Dendritic cell treated with granulocyte-macrophage colony-stimulating factor and Interleukin-4, amounts not matched to agents 40 ng/mL and 50 ng/mL, for 4 days (primary cell): ENCODE measurements at regions of chr13 and their contacts with region 1.

Region 1: GRCh38 chr13:48037346-48038173 is at the start of gene NUDT15:
- H3K4me3 Mint-ChIP-seq: peak within 1 kb of the TSS; percentile 90
- H3K27ac Mint-ChIP-seq: peak within 1 kb of the TSS; percentile 99
- H3K4me1 Mint-ChIP-seq: peaks cover 20% of the 10 kb centered on the region
- H3K27me3 Mint-ChIP-seq: no peaks in the 10 kb centered on the region

Region 2: DNA sequence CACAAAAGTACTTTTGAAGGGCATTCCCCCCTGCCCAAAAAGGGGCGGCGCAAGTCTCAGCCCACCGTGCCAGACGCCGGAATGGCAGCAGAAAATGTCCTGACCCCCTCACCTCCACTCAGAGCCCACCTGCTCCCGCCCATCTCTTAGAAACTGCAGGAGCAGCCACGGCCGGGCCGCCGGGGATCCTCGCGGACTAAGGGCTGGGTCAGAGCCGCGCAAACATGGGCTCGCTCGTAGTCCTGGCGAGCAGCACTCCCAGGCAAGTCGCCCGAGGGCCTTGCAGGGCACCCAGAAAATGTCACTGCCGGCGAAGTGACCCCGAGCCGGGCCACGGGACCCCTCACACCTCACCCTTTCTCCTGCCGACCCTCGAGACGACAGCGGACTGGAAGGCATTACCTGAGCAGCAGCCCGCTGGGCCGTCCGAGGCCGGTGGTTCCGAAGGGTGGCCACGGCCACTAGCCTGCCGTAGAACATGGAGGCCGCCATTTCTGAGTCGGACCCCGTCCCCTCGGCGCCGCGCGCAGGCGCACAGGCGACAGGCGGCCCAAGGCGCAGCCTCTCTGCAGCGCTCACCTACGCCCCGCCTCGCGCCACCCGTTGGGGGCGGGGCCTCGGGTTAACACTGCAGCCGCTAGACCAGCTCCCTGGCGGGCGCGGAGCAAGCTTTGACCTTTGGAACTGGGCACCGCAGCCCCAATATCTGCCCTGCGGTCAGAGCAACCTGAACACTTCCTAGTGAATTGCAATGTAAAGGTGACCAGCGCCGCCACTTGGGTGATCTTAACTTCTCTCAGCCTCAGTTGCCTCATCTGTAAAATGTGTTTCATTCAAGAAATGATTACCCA is 36.6 kb before region 1 on chr13 and contains the start of gene SUCLA2:
- intact Hi-C with region 1: loop called (anchors 5 kb)
- H3K4me3 Mint-ChIP-seq: peak within 1 kb of the TSS; percentile 96
- H3K27ac Mint-ChIP-seq: peak within 1 kb of the TSS; percentile 90
- H3K4me1 Mint-ChIP-seq: peaks cover 30% of the 10 kb centered on the region
- H3K27me3 Mint-ChIP-seq: no peaks in the 10 kb centered on the region

Region 3: DNA sequence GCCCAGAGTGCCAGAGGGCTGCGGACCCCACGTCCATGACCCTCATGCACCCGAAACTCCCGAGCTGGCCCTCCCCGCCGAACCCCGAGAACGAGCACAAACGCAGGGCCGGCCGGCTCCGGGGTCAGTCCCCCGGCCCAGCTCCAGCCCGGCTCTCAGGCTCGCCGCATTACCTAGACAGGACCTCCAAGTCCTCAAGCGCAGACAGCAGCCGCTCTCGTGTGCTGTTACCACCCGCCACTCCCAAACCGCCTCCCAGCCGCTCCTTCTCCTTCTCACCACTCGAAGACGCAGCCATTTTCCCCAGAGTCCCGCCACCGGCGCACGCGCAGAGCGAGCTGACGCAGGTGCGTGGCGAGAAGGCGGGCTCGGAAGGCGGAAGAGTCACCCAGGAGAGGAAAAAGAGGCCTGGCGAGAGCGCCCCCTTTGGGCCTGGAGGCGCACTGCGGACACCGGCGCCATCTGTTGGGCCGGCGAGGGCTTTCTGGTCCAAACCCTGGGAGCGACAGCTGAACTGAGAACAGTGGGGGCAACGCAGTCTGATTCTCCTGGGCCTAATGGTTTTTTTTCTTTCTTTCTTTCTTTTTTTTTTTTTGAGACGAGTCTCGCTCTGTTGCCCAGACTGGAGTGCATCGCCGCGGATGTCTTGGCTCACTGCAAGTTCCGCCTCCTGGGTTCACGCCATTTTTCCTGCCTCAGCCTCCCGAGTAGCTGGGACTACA is 57.4 kb after region 1 on chr13 and contains the start of gene MED4:
- intact Hi-C with region 1: loop called (anchors 2 kb)
- H3K4me3 Mint-ChIP-seq: peak within 1 kb of the TSS; percentile 93
- H3K27ac Mint-ChIP-seq: peak within 1 kb of the TSS; percentile 99
- H3K4me1 Mint-ChIP-seq: peaks cover 30% of the 10 kb centered on the region
- H3K27me3 Mint-ChIP-seq: peaks cover 2% of the 10 kb centered on the region